Gastrocnemius medialis (tissue), 4 donors: ENCODE measurements at regions of chr2 and their contacts with region 1.

Region 1: DNA sequence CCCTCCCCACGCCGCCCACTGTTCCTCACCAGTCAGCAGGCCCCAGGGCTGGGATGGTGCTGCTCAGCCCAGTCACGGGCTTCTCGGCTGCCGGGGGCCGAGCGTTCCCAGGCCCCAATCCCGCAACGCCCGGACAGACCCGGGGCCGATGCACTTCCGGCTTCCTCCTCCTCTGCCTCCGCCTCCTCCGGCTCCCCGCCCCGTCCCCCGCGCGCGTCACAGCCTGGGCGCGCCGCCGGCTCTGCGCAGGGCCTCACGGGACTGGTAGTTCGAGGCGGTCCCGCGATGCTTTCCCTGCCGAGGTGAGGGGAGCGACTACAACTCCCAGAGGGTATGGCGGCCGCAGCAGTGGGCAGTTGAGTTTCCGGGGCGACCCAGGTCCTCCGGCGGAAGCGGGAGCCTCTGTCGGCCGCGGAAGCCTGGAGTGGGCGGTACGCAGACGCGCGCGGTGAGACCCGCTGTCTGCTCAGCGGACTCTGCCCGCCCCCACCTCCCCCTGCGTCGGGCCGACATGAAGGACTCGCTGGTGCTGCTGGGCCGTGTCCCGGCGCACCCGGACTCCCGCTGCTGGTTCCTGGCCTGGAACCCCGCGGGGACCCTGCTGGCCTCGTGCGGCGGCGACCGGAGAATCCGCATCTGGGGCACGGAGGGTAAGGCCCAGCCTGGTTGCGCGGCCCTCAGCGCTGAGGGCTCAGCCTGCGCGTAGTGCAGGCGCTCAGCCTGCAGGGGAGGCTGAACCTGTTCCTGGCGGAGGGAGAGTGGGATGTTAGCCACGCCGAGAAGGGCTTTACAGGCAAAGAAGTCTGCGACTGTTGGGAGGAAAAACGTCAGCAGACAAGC is at the starts of genes CIAO1 and TMEM127:
- DNase-seq: peak; percentile 98 to 99
- ATAC-seq: peak; percentile 87
- H3K4me3 ChIP-seq: peak within 1 kb of the TSS; percentile 84 to 97 (median 90)
- H3K27ac ChIP-seq: peak within 1 kb of the TSS; percentile 94 to 99 (median 96)
- H3K4me1 ChIP-seq: peaks cover 49 to 51% of the 10 kb centered on the region in 2 donors
- H3K27me3 ChIP-seq: no peaks in the 10 kb centered on the region
- CTCF ChIP-seq: peak; percentile 20 to 42 (median 35)
- POLR2A ChIP-seq: peak; percentile 98
- total RNA-seq, gene CIAO1: 73.5 to 102 (median 95.6) TPM
- total RNA-seq, gene TMEM127: 27.1 to 38.8 (median 30.9) TPM

Region 2: GRCh38 chr2:96024336-96025193 is 241.5 kb before region 1 on chr2:
- in situ Hi-C with region 1: loop called in 1 of 4 experiments (anchors 25 kb)
- intact Hi-C with region 1: loop called (anchors 10 kb)
- DNase-seq: no peak
- ATAC-seq: no peak
- H3K4me3 ChIP-seq: peak overlapping the region in 1 of 4 donors; percentile 28
- H3K27ac ChIP-seq: peak overlapping the region in 1 of 4 donors; percentile 28
- H3K4me1 ChIP-seq: peaks cover 0 to 1% of the 10 kb centered on the region in 2 donors
- H3K27me3 ChIP-seq: no peaks in the 10 kb centered on the region
- CTCF ChIP-seq: no peak
- POLR2A ChIP-seq: no peak

Region 3: GRCh38 chr2:96251721-96252292 is 14.3 kb before region 1 on chr2:
- in situ Hi-C with region 1: no loop called
- intact Hi-C with region 1: no loop called
- DNase-seq: peak; percentile 90 to 98
- ATAC-seq: peak; percentile 90 to 92
- H3K4me3 ChIP-seq: peak overlapping the region in 1 of 4 donors; percentile 45
- H3K27ac ChIP-seq: peak overlapping the region; percentile 94 to 99 (median 96)
- H3K4me1 ChIP-seq: peaks cover 78 to 86% of the 10 kb centered on the region in 2 donors
- H3K27me3 ChIP-seq: no peaks in the 10 kb centered on the region
- CTCF ChIP-seq: no peak
- POLR2A ChIP-seq: no peak

Region 4: GRCh38 chr2:96305091-96305978 is 39.3 kb after region 1 on chr2 and contains the start of gene SNRNP200:
- in situ Hi-C with region 1: no loop called
- intact Hi-C with region 1: loop called (anchors 1 kb)
- DNase-seq: peak; percentile 74 to 80
- ATAC-seq: peak; percentile 98 to 99
- H3K4me3 ChIP-seq: peak within 1 kb of the TSS; percentile 83 to 95 (median 89)
- H3K27ac ChIP-seq: peak within 1 kb of the TSS; percentile 81 to 92 (median 88)
- H3K4me1 ChIP-seq: peaks cover 17 to 18% of the 10 kb centered on the region in 2 donors
- H3K27me3 ChIP-seq: no peaks in the 10 kb centered on the region
- CTCF ChIP-seq: no peak
- POLR2A ChIP-seq: peak; percentile 61 to 80
- total RNA-seq, gene SNRNP200: 51.1 to 89.8 (median 67.4) TPM

Region 5: GRCh38 chr2:96329416-96330269 is 63.6 kb after region 1 on chr2:
- in situ Hi-C with region 1: no loop called
- intact Hi-C with region 1: loop called (anchors 10 kb)
- DNase-seq: no peak
- ATAC-seq: no peak
- H3K4me3 ChIP-seq: no peak overlapping the region
- H3K27ac ChIP-seq: peak overlapping the region in 1 of 4 donors; percentile 47
- H3K4me1 ChIP-seq: peaks cover 10 to 21% of the 10 kb centered on the region in 2 donors
- H3K27me3 ChIP-seq: peaks cover 6 to 15% (median 10%) of the 10 kb centered on the region in 3 donors
- CTCF ChIP-seq: no peak
- POLR2A ChIP-seq: no peak